ENCODE measurements at regions of chr13 and their contacts with region 1.

Region 1: GRCh38 chr13:20495082-20496023 is 30.3 kb downstream of the CRYL1 start:
- DNase-seq: no peak
- H3K4me3 ChIP-seq: peak overlapping the region in 1 of 4 donors; percentile 15
- H3K27ac ChIP-seq: peak overlapping the region in 1 of 4 donors; percentile 23
- H3K4me1 ChIP-seq: peaks cover 0 to 11% (median 8%) of the 10 kb centered on the region in 4 donors
- H3K27me3 ChIP-seq: no peaks in the 10 kb centered on the region
- CTCF ChIP-seq: peak; percentile 60 to 97 (median 88)
- EP300 ChIP-seq: no peak
- POLR2A ChIP-seq: no peak

Region 2: DNA sequence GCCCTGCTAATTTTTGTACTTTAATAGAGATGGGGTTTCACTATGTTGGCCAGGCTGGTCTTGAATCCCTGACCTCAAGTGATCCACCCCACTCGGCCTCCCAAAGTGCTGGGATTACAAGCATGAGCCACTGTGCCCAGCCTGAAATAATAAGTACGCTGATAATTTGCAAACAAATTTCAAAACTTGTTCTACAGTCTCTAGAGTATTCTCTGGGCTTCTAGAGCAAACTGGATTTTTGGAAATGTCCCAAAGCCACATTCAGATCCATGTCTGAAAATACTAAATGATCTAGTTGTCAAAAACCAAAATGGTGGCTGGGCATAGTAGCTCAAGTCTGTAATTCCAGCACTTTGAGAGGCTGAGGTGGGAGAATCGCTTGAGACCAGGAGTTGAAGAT is 672.7 kb before region 1 on chr13:
- intact Hi-C with region 1: no loop called
- DNase-seq: no peak
- H3K4me3 ChIP-seq: no peak overlapping the region
- H3K27ac ChIP-seq: no peak overlapping the region
- H3K4me1 ChIP-seq: no peaks in the 10 kb centered on the region
- H3K27me3 ChIP-seq: no peaks in the 10 kb centered on the region
- CTCF ChIP-seq: no peak
- EP300 ChIP-seq: no peak
- POLR2A ChIP-seq: no peak

Region 3: DNA sequence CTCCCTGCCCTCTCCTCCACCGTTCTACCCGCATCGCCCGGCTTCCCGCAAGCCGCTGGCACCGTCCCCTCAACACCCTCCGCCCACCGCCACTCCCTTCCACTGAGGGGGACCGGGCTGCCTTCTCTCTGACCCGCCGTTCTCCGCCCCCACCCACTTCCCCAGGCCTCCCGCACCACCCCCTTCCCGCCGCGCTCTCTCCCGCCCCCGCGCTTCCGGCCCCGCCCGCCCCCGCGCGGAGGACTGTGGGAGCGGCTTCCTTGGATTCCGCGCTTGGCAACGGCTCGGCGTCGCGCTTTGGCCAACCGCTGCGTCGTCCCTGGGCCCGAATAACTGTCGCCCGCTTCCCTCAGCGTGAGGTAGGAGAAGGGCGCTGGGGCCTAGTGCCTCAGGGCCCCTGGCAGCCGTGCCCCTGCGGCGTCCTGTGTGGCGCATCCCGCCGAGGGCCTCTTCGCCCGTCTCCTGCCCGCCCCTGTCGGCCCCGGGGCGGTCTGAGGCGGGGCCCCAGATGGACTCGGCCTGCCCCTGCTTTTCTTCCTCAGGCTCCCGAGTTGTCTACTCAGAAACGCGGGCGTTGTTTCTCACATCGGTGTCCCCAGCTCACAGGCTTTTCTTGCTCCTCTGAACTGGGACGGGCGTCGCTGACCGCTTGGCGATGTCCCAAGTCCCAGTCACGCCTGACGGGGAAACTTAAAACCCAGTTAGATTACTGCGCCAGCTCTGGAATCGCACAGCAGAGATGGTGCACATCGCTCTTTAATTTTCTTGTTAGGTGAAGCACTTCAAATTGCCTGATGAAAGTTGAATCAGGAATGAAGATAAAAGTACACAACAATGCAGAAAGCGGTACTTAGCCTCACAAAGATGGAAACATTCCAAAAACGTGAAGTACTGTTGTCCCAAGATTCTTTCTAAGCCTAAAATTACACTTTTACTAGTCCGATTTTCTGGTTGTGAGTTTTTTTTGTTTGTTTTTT is 71.8 kb after region 1 on chr13 and contains the start of gene IFT88:
- intact Hi-C with region 1: loop called (anchors 2 kb)
- DNase-seq: peak; percentile 92
- H3K4me3 ChIP-seq: peak within 1 kb of the TSS; percentile 67 to 81 (median 74)
- H3K27ac ChIP-seq: peak within 1 kb of the TSS; percentile 94 to 96 (median 95)
- H3K4me1 ChIP-seq: peaks cover 0 to 19% (median 15%) of the 10 kb centered on the region in 4 donors
- H3K27me3 ChIP-seq: no peaks in the 10 kb centered on the region
- CTCF ChIP-seq: no peak
- EP300 ChIP-seq: no peak
- POLR2A ChIP-seq: peak in 1 of 2 donors; percentile 9
- total RNA-seq, gene IFT88: 13.8 to 21.8 (median 16.9) TPM

Region 4: DNA sequence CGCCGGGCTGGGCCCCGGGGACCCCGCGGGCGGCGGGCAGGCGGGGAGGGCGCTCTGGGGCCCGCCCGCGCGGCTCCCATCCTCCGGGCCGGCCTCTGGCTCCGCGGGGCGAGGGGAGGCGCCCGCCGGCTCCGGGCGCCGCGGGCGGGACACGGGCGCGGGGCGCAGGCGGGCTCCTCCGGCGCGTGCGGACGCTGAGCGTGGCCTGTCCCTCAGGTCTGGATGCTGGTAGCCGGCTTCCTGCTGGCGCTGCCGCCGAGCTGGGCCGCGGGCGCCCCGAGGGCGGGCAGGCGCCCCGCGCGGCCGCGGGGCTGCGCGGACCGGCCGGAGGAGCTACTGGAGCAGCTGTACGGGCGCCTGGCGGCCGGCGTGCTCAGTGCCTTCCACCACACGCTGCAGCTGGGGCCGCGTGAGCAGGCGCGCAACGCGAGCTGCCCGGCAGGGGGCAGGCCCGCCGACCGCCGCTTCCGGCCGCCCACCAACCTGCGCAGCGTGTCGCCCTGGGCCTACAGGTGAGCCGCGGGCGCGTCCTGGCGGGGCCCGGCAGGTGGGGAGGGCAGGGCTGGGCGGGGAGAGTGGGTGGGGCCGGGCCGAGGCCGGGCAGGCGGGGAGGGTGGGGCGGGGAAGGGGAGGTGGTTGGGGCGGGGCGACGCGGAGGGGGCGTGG is 208.6 kb after region 1 on chr13:
- intact Hi-C with region 1: loop called (anchors 5 kb)
- DNase-seq: peak; percentile 88
- H3K4me3 ChIP-seq: peak overlapping the region in 3 of 4 donors; percentile 61 to 80 (median 75)
- H3K27ac ChIP-seq: peak overlapping the region; percentile 49 to 67 (median 55)
- H3K4me1 ChIP-seq: peaks cover 0 to 14% (median 11%) of the 10 kb centered on the region in 4 donors
- H3K27me3 ChIP-seq: peaks cover 0 to 32% (median 6%) of the 10 kb centered on the region in 3 donors
- CTCF ChIP-seq: peak in 2 of 4 experiments; percentile 13 to 67
- EP300 ChIP-seq: no peak
- POLR2A ChIP-seq: no peak

Region 5: DNA sequence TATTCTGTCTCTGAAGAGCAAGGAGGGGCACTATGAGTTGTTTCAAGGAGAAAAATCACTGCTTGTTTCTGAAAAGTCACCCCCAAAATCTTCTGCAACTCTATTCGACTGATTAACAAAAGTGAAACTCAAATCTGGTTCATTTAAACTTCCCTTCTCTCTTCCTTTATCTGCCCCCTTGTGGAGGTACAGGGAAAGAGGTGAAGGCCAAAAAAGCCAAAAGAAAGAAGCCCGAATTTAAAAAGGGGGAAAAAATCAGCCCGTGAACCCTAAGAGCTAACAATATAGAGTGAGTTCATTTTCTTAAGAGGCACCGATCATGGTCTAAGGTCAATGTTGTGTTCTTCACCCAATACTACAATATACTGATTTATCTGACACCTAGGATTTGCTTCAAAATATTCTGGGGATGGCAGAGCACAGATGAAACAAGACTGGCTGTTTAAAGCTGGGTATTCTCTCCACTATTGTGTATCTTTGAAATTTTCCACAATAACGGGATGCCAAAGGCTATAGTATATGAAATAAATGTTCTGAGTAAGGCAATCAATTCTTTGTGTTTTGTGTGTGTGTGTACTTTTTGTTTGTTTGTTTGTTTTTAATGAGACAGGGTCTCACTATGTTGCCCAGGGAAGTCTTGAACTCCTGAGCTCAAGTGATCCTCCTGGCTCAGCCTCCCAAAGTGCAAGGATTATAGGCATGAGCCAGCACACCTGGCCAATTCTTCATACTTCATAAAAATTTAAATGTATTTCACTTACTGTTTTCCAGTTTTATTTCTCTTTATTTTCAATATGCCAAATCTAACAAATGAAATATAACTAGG is 333.4 kb after region 1 on chr13:
- intact Hi-C with region 1: loop called (anchors 5 kb)
- DNase-seq: no peak
- H3K4me3 ChIP-seq: peak overlapping the region in 3 of 4 donors; percentile 16 to 30 (median 23)
- H3K27ac ChIP-seq: peak overlapping the region; percentile 44 to 55 (median 47)
- H3K4me1 ChIP-seq: peaks cover 0 to 65% (median 35%) of the 10 kb centered on the region in 4 donors
- H3K27me3 ChIP-seq: no peaks in the 10 kb centered on the region
- CTCF ChIP-seq: peak; percentile 49 to 82 (median 79)
- EP300 ChIP-seq: no peak
- POLR2A ChIP-seq: no peak

Region 6: GRCh38 chr13:20924758-20925394 is 429.5 kb after region 1 on chr13:
- intact Hi-C with region 1: loop called (anchors 2 kb)
- DNase-seq: peak; percentile 86
- H3K4me3 ChIP-seq: no peak overlapping the region
- H3K27ac ChIP-seq: no peak overlapping the region
- H3K4me1 ChIP-seq: no peaks in the 10 kb centered on the region
- H3K27me3 ChIP-seq: no peaks in the 10 kb centered on the region
- CTCF ChIP-seq: peak; percentile 44 to 64 (median 51)
- EP300 ChIP-seq: no peak
- POLR2A ChIP-seq: no peak

Measured in sigmoid colon (tissue), 7 donors.